Gastrocnemius medialis (tissue), 4 donors: ENCODE measurements at regions of chr4 and their contacts with region 1.

Region 1: DNA sequence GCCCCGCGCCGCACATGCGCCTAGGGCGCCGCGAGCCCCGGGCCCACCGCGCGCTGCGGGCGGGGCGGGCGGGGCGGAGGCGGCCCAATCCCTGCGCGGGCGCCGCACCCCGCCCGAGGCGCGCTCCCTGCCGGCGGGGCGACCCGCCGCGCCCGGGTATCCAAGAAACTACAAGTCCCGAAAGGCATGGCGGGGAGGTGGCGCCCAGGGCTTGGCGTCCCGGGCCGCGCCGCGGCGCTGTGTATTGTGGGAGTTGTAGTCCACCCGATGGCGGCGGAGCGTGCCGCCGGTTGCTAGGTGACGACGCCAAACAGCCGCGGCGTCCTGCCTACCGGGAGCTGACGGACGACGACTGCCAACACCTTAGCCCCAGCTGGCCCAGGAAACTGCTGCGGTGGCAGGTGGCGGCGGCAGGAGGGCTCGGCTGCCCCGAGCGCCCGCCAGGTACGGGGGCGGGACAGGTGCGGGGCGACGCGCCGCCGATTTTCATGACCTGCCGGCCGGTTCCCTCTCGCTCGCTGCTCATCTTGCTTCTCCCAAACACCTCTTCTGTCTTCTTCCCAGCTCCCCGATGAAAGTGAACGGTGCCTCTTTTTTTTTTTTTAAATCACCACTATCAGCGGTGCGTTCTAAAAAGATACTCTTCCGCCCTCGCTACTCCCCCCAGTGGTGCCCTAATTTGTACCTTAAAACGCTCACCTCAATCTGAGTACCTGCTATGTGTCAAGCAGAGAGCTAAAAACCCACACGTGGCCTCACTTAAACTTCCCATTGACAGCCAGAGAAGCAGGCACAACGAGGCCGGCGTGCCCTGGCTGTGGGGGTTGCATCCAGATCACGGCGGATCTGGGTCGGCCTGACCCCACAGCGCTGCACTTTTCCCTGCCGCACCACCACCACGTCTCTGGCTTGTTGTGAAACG is at the start of gene CFAP99:
- DNase-seq: peak; percentile 97 to 98
- ATAC-seq: peak; percentile 90 to 91
- H3K4me3 ChIP-seq: peak within 1 kb of the TSS; percentile 69 to 94 (median 77)
- H3K27ac ChIP-seq: peak within 1 kb of the TSS; percentile 47 to 79 (median 64)
- H3K4me1 ChIP-seq: peaks cover 16 to 26% of the 10 kb centered on the region in 2 donors
- H3K27me3 ChIP-seq: peaks cover 0 to 23% (median 15%) of the 10 kb centered on the region in 3 donors
- CTCF ChIP-seq: peak in 3 of 5 experiments; percentile 4 to 11 (median 5)
- POLR2A ChIP-seq: no peak
- total RNA-seq, gene CFAP99: not detected

Region 2: DNA sequence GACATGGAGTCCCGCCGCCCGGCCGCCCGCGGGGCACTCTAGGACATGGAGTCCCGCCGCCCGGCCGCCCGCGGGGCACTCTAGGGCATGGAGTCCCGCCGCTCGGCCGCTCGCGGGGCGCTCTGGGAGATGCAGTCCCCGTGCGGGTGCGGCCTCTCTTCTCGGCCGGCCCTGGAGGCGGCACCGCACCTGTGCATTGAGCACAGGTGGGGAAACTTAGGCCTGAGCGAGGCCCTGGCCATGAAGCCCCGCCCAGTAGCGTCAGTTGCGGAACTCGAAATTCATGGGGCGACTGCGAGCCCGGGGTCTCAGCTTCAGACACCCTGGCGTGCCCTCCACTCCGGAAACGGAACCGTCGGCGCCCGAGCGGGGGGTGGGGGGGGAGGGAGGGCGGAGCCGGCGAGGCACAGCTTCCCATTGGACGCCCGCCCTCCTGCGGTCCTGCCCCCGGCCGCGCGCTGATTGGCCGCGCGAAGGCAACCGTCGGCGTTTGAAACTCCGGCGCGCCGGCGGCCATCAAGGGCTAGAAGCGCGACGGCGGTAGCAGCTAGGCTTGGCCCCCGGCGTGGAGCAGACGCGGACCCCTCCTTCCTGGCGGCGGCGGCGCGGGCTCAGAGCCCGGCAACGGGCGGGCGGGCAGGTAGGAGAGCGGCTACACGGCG is 697.8 kb before region 1 on chr4 and contains the starts of genes TACC3 and TMEM129:
- in situ Hi-C with region 1: no loop called
- intact Hi-C with region 1: loop called (anchors 10 kb)
- DNase-seq: peak; percentile 93 to 96
- ATAC-seq: peak; percentile 94 to 96
- H3K4me3 ChIP-seq: peak within 1 kb of the TSS; percentile 79 to 95 (median 83)
- H3K27ac ChIP-seq: peak within 1 kb of the TSS; percentile 94 to 98 (median 97)
- H3K4me1 ChIP-seq: peaks cover 24 to 27% of the 10 kb centered on the region in 2 donors
- H3K27me3 ChIP-seq: no peaks in the 10 kb centered on the region
- CTCF ChIP-seq: no peak
- POLR2A ChIP-seq: peak; percentile 74 to 80
- total RNA-seq, gene TACC3: 1.5 to 3.2 (median 1.9) TPM
- total RNA-seq, gene TMEM129: 30.3 to 78.0 (median 44.2) TPM

Region 3: GRCh38 chr4:2241410-2242353 is 177.2 kb before region 1 on chr4 and contains the starts of genes HAUS3 and POLN:
- in situ Hi-C with region 1: loop called in 2 of 4 experiments (anchors 25 kb)
- intact Hi-C with region 1: no loop called
- DNase-seq: peak; percentile 96 to 97
- ATAC-seq: peak; percentile 97 to 98
- H3K4me3 ChIP-seq: peak within 1 kb of the TSS; percentile 88 to 98 (median 92)
- H3K27ac ChIP-seq: peak within 1 kb of the TSS; percentile 75 to 86 (median 82)
- H3K4me1 ChIP-seq: peaks cover 34 to 39% of the 10 kb centered on the region in 2 donors
- H3K27me3 ChIP-seq: no peaks in the 10 kb centered on the region
- CTCF ChIP-seq: no peak
- POLR2A ChIP-seq: peak; percentile 74 to 86
- total RNA-seq, gene HAUS3: 4.8 to 12.1 (median 9.5) TPM
- total RNA-seq, gene POLN: 0.71 to 2.0 (median 0.86) TPM in 3 of 4 donors, not detected in the other

Region 4: DNA sequence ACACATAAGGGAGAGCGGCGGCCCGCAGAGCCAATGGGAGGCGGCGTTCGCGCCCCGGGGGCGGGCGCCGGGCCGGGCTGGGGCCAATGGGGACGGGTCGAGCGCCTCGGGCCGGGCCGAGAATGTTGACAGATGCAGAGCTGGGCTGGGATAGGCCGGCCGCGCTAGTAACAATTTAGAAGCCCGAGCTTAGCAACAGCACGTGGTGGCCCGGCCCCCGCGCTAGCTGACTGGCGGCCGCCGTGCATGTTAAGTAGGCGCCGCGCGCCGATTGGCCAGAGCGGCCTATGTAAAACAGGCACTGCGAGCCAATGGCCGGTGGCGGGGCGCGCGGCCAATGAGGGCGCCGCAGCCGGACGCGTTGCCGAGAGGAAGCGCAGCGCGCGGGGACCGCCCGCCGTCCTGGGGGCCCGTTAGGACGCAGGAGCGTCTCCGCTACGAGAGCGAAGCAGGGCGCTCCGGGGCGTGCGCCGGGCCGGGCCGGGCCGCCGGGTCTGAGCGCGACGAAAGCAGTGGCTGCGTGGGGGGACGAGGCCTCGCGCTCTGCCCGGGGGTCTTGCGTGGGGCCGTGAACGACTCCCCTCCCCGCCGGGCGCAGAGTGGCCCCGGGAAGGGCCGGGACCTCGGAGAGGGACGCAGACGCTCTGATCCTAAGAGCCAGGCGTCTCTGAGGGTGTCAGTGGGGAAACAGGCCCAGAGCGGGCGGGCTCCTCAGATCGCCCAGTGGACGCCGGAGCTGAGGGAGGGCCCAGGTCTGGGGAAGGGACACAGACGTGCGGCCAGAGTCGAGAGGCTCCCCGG is 156.6 kb before region 1 on chr4:
- in situ Hi-C with region 1: no loop called
- intact Hi-C with region 1: loop called (anchors 5 kb)
- DNase-seq: peak; percentile 99 to 100
- ATAC-seq: peak; percentile 81 to 82
- H3K4me3 ChIP-seq: peak overlapping the region; percentile 56 to 91 (median 76)
- H3K27ac ChIP-seq: peak overlapping the region; percentile 93 to 99 (median 96)
- H3K4me1 ChIP-seq: peaks cover 55 to 77% of the 10 kb centered on the region in 2 donors
- H3K27me3 ChIP-seq: no peaks in the 10 kb centered on the region
- CTCF ChIP-seq: no peak
- POLR2A ChIP-seq: peak; percentile 91 to 98

Region 5: DNA sequence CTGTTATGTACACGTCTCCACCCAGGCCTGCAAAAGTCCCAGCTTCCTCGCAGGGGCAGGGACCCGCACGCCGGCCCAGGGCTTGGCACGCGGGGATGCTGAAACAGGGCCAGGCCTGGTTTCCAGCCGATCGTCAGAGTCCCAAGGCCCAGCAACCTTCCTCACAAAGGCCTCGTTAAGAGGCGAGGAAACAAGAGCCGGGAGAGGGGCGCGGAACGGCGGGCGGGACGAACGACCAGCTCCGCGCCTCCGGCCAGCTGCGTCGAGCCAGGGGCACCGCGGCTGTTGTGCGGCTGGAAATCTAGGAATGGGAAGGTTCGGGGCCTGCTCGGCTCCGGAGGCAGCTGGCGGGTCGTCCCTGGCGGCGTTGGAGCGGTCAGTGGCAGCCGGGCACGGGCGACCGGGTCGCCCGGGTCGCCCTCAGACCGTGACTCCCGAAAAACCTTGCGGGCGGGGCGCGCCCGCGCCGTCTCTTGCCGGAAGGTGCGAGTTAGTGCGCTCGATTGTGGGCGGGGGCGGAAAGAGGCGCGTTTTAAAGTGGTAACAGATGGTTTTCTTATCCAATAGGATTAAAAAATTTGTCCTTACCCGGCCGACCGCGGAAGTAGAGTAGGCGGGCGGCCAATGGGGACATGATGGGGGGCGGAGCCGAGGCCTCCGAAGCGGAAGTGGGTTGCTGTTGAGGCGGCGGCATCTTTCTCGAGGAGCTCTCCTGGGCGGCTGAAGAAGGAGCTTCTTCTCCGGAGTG is 49.7 kb after region 1 on chr4 and contains the start of gene RNF4:
- in situ Hi-C with region 1: no loop called
- intact Hi-C with region 1: loop called (anchors 2 kb)
- DNase-seq: peak; percentile 94 to 97
- ATAC-seq: peak; percentile 98
- H3K4me3 ChIP-seq: peak within 1 kb of the TSS; percentile 81 to 89 (median 88)
- H3K27ac ChIP-seq: peak within 1 kb of the TSS; percentile 88 to 98 (median 94)
- H3K4me1 ChIP-seq: peaks cover 26 to 27% of the 10 kb centered on the region in 2 donors
- H3K27me3 ChIP-seq: no peaks in the 10 kb centered on the region
- CTCF ChIP-seq: no peak
- POLR2A ChIP-seq: peak; percentile 75 to 81
- total RNA-seq, gene RNF4: 21.7 to 48.7 (median 34.7) TPM

Region 6: DNA sequence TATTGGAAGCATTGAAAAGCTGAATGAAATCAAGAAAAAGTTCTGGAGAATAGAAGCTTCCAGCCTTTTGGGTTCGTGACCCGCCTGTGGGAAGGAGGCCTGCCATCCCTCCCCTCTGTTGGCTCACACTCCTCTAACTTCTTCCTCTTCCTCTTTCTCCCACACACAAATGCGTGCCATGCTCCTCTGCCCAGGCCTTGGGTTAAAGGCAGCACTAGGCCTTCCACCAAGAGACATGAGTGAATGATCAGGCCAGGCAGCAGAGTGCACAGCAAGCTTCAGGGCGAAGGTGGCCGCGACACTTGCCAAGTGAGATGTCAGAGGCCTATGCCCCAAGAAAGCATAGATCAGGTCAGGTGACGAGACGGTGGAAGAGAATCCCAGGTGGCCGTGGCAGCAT is 156.0 kb after region 1 on chr4:
- in situ Hi-C with region 1: no loop called
- intact Hi-C with region 1: no loop called
- DNase-seq: no peak
- ATAC-seq: no peak
- H3K4me3 ChIP-seq: no peak overlapping the region
- H3K27ac ChIP-seq: no peak overlapping the region
- H3K4me1 ChIP-seq: peaks cover 32 to 34% of the 10 kb centered on the region in 2 donors
- H3K27me3 ChIP-seq: no peaks in the 10 kb centered on the region
- CTCF ChIP-seq: no peak
- POLR2A ChIP-seq: no peak

Region 7: DNA sequence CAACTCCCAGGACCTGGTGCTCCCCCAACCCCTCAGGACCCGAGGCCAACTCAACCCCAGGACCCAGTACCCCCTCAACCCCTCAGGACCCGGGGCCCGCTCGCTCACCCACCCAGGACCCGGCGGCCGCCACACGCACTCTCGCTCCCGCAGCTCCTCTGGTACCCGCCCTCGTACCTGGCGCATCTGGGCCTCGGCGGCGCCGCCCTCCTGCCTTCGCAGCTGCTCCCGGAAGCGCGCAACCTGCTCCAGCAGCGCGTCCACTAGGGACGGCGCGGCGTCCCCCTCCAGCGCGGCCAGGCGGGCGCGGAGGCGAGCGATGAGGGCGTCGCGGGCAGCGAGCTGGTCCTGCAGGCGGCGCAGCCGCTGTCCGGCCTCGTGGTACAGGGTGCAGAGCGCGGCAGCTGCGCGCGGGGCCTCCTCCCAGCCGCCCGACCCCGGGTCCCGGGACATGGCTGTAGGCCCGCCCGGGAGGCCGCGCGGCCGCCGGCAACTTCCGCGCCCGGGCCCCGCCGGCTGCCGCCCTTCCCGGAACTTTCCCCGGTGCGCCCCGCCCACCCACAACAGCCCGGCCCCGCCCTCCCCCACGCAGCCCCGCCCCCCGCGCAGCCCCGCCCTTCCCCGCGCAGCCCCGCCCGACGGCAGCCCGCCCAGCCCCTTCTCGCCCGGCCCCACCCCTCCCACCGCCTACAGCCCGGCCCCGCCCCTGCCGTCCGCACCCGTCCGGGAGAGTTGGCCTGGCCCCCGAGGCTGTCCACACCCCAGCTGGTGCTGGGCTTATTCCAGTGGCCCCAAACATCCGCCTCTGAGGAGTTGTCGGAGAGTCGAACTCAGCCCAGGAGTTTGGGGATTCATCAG is 337.2 kb after region 1 on chr4 and contains the start of gene TNIP2:
- in situ Hi-C with region 1: no loop called
- intact Hi-C with region 1: loop called (anchors 5 kb)
- DNase-seq: peak; percentile 77
- ATAC-seq: peak; percentile 72 to 85
- H3K4me3 ChIP-seq: peak within 1 kb of the TSS; percentile 68 to 91 (median 81)
- H3K27ac ChIP-seq: peak within 1 kb of the TSS; percentile 72 to 87 (median 84)
- H3K4me1 ChIP-seq: peaks cover 12 to 19% of the 10 kb centered on the region in 2 donors
- H3K27me3 ChIP-seq: no peaks in the 10 kb centered on the region
- CTCF ChIP-seq: peak in 4 of 5 experiments; percentile 47 to 65 (median 56)
- POLR2A ChIP-seq: peak; percentile 62 to 79
- total RNA-seq, gene TNIP2: 36.1 to 81.9 (median 66.5) TPM